ENCODE measurements at regions of chr2 and their contacts with region 1.

Region 1: GRCh38 chr2:102442967-102443828 is 20.2 kb downstream of the IL18RAP start:
- DNase-seq: no peak
- H3K4me3 ChIP-seq: no peak overlapping the region
- H3K27ac ChIP-seq: no peak overlapping the region
- H3K27me3 ChIP-seq: no peaks in the 10 kb centered on the region
- CTCF ChIP-seq: peak; percentile 87

Region 2: GRCh38 chr2:102235491-102235890 is 207.7 kb before region 1 on chr2:
- CTCF ChIA-PET with region 1: interaction called, 23 read pairs
- POLR2A ChIA-PET with region 1: no interaction called
- DNase-seq: no peak
- H3K4me3 ChIP-seq: no peak overlapping the region
- H3K27ac ChIP-seq: no peak overlapping the region
- H3K27me3 ChIP-seq: no peaks in the 10 kb centered on the region
- CTCF ChIP-seq: peak; percentile 41; the same call in 1 of the 2 replicates

Region 3: GRCh38 chr2:102251042-102251848 is 192.0 kb before region 1 on chr2:
- CTCF ChIA-PET with region 1: interaction called, 17 read pairs
- POLR2A ChIA-PET with region 1: no interaction called
- DNase-seq: no peak
- H3K4me3 ChIP-seq: peak overlapping the region; percentile 46
- H3K27ac ChIP-seq: no peak overlapping the region
- H3K27me3 ChIP-seq: no peaks in the 10 kb centered on the region
- CTCF ChIP-seq: peak; percentile 50

Region 4: GRCh38 chr2:102282678-102283091 is 160.5 kb before region 1 on chr2:
- CTCF ChIA-PET with region 1: no interaction called
- POLR2A ChIA-PET with region 1: no interaction called
- DNase-seq: no peak
- H3K4me3 ChIP-seq: no peak overlapping the region
- H3K27ac ChIP-seq: no peak overlapping the region
- H3K27me3 ChIP-seq: no peaks in the 10 kb centered on the region
- CTCF ChIP-seq: no peak

Region 5: DNA sequence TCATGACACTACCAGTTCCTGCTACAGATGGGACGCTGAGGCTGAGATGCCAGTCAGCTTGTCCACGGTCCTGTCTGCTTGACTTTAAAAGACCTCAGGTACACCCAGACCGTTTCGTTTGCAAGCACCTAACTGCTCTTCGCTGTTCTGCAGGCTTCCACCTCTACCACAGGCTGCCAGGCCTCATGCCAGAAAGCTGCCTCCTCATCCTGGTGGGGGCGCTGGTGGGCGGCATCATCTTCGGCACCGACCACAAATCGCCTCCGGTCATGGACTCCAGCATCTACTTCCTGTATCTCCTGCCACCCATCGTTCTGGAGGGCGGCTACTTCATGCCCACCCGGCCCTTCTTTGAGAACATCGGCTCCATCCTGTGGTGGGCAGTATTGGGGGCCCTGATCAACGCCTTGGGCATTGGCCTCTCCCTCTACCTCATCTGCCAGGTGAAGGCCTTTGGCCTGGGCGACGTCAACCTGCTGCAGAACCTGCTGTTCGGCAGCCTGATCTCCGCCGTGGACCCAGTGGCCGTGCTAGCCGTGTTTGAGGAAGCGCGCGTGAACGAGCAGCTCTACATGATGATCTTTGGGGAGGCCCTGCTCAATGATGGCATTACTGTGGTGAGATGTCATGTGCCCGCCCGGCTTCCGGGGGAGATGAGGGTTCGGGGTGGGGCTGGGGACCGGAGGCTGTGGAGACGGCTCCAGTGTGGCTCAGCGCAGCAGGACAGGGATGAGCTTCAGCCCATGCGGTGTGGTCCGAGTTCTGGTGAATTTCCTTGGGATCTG is 35.7 kb after region 1 on chr2:
- CTCF ChIA-PET with region 1: no interaction called
- POLR2A ChIA-PET with region 1: no interaction called
- DNase-seq: no peak
- H3K4me3 ChIP-seq: no peak overlapping the region
- H3K27ac ChIP-seq: no peak overlapping the region
- H3K27me3 ChIP-seq: peaks cover 25% of the 10 kb centered on the region
- CTCF ChIP-seq: no peak

Measured in AG04450 (cell line).